Activated CD4-positive, alpha-beta T cell treated with anti-CD3 and anti-CD28 coated beads for 36 hours (primary cell): ENCODE measurements at regions of chr17 and their contacts with region 1.

Region 1: DNA sequence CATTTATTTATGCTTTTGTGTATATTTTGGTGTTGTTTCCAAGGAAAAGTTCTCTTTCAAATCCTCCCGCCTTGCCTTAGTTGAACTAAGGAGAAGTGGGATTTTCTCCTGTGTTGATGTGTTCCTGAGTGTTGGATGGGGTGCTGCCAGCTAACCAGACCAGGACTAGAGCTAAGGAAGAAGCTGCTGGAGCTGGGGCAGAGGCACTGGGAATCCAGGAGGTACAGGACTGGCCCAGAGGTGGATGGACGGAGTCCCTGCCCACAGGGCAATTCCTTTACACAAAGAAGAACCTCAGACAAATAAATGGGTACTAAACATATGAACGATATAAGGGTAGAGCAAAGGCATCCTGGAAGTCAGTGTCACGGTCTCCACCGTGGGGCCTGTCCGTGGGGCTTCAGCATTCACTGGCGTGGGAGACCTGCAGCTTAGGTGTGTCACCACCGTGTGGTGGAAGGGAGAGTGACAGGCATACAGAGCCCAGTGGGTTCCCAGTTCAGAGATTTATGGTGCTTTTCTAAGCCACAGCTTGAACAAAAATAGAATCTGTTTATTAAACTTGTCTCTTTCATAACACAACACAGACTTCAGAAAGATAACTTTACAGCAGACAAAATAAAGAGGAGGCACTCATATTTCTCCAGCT is 270.7 kb downstream of the NTN1 start:
- DNase-seq: peak; percentile 75
- ATAC-seq: no peak
- H3K4me3 Mint-ChIP-seq: no peak overlapping the region
- H3K27ac Mint-ChIP-seq: no peak overlapping the region
- H3K4me1 Mint-ChIP-seq: peaks cover 42% of the 10 kb centered on the region
- H3K27me3 Mint-ChIP-seq: no peaks in the 10 kb centered on the region

Region 2: DNA sequence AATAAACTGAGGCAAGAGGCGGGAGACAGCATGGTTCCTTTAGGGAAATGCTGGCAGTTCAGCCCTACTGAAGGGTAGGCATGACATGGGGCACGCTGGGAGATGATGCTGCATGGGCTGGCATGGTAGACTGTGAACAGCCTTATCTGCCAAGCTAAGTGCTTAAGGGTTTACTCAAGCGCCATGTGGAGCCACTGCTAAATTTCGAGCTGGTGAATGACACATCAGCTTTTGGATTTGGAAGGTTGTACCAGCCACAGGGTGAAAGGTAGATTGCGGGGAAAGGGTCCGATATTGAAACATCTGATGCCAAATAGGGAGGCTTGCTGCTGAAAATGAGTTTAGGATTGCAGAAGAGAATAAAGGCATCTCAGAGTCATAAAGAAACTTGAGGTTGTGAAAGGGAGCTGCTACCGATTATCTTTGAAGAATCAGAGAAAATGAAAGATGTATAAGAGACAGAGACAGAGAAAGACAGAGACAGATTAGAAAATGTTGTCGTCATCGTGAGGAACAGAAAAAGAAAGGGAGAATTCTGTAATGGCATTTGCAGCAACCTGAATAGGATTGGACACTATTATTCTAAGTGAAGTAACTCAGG is 342.9 kb before region 1 on chr17:
- CTCF ChIA-PET with region 1: no interaction called
- POLR2A ChIA-PET with region 1: no interaction called
- intact Hi-C with region 1: loop called in 1 of 2 experiments (anchors 1 kb)
- DNase-seq: peak; percentile 62
- ATAC-seq: peak; percentile 75
- H3K4me3 Mint-ChIP-seq: peak overlapping the region; percentile 61
- H3K27ac Mint-ChIP-seq: peak overlapping the region; percentile 79
- H3K4me1 Mint-ChIP-seq: peaks cover 86% of the 10 kb centered on the region
- H3K27me3 Mint-ChIP-seq: no peaks in the 10 kb centered on the region

Region 3: GRCh38 chr17:9021158-9021991 is 270.7 kb before region 1 on chr17 and contains the start of gene NTN1:
- CTCF ChIA-PET with region 1: interaction called, 3 read pairs
- POLR2A ChIA-PET with region 1: no interaction called
- intact Hi-C with region 1: loop called in 1 of 2 experiments (anchors 2 kb)
- DNase-seq: peak; percentile 82
- ATAC-seq: peak; percentile 89
- H3K4me3 Mint-ChIP-seq: peak within 1 kb of the TSS; percentile 77
- H3K27ac Mint-ChIP-seq: no peak within 1 kb of the TSS
- H3K4me1 Mint-ChIP-seq: peaks cover 6% of the 10 kb centered on the region
- H3K27me3 Mint-ChIP-seq: peaks cover 48% of the 10 kb centered on the region
- total RNA-seq, gene NTN1: 0.60 to 0.71 TPM

Region 4: DNA sequence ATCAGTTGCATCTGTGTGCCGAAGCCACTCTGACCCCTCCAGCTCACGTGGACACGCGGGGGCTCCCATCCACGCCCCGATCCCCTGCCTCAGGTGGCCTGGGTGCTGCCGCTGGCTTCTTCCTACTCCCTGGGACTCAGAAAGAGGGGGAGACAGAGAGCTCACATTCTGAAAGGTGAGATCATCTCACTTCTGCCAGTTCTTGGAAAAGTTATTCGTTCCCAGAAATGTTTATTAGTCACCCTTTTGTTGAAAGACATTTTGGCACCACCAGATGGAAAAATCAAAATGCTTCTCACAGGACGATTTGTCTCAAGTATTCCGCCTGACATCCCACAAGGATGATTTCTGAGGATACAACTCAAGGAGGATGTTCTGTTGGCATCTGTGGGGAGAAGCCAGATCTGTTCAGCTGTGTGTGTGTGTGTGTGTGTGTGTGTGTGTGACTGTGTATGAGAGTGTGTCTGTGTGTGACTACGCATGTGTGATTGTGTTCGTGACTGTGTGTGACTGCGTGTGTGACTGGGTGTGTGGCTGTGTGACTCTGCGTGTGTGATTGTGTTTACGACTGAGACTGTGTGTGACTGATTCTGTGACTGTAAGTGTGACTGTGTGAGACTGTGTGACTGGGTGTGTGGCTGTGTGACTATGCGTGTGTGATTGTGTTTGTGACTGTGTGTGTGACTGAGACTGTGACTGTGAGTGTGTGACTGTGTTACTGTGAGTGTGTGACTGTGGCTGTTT is 63.5 kb before region 1 on chr17:
- CTCF ChIA-PET with region 1: interaction called, 7 read pairs
- POLR2A ChIA-PET with region 1: no interaction called
- intact Hi-C with region 1: loop called in 1 of 2 experiments (anchors 1 kb)
- DNase-seq: peak; percentile 26
- ATAC-seq: peak; percentile 67
- H3K4me3 Mint-ChIP-seq: no peak overlapping the region
- H3K27ac Mint-ChIP-seq: no peak overlapping the region
- H3K4me1 Mint-ChIP-seq: peaks cover 2% of the 10 kb centered on the region
- H3K27me3 Mint-ChIP-seq: no peaks in the 10 kb centered on the region

Region 5: GRCh38 chr17:9256751-9257629 is 35.0 kb before region 1 on chr17:
- CTCF ChIA-PET with region 1: interaction called, 5 read pairs
- POLR2A ChIA-PET with region 1: interaction called, 8 read pairs
- intact Hi-C with region 1: loop called (anchors 1 kb)
- DNase-seq: no peak
- ATAC-seq: no peak
- H3K4me3 Mint-ChIP-seq: no peak overlapping the region
- H3K27ac Mint-ChIP-seq: no peak overlapping the region
- H3K4me1 Mint-ChIP-seq: peaks cover 67% of the 10 kb centered on the region
- H3K27me3 Mint-ChIP-seq: no peaks in the 10 kb centered on the region

Region 6: DNA sequence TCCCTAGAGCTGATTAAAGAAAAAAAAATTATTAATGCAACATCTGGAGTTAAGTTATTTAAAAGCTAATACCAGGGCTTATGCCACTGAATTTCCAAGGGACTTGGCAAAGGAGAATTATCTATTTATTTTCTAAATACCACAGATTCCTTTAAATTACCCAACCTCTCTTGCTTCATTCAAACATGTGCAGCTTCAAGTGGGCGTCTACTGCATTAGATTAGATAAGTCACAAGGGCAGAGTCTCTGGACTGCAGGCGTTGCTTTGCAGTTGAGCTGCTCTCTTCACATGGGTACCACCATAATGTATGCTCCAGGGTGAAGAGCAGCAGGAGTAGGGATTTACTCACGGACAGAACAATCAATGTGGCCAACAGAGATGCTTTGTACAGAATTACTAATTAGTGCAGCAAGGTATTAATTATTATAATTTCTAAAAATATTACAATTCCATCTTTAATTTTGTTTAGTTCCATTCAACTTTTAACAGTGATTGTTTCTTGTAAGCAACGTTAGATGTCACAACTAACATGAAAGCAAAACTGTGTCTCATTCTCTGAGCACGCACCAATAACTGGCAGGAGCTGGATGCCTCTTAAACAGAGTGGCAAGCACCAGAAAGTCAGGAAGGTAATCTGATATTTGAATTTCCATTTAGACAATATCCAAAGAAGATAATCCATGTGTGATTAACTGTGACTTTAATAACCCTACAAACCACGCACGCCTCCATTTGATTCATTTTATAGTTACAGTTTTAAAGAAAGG is 69.3 kb after region 1 on chr17:
- CTCF ChIA-PET with region 1: no interaction called
- POLR2A ChIA-PET with region 1: no interaction called
- intact Hi-C with region 1: loop called (anchors 1 to 10 kb)
- DNase-seq: no peak
- ATAC-seq: no peak
- H3K4me3 Mint-ChIP-seq: no peak overlapping the region
- H3K27ac Mint-ChIP-seq: no peak overlapping the region
- H3K4me1 Mint-ChIP-seq: peaks cover 14% of the 10 kb centered on the region
- H3K27me3 Mint-ChIP-seq: no peaks in the 10 kb centered on the region